ENCODE measurements at regions of chr6 and their contacts with region 1.

Region 1: GRCh38 chr6:156776840-156777576 is at the start of gene ARID1B:
- DNase-seq: peak; percentile 81 to 94 (median 83)
- ATAC-seq: peak; percentile 66
- H3K4me3 ChIP-seq: peak within 1 kb of the TSS; percentile 56 to 72
- H3K27ac ChIP-seq: peak within 1 kb of the TSS; percentile 95 to 100
- H3K4me1 ChIP-seq: peaks cover 7 to 40% of the 10 kb centered on the region in 2 donors
- H3K27me3 ChIP-seq: no peaks in the 10 kb centered on the region
- CTCF ChIP-seq: no peak
- polyA plus RNA-seq, gene ARID1B: 96.2 to 102 (median 101) TPM

Region 2: GRCh38 chr6:156686995-156687788 is 89.8 kb before region 1 on chr6:
- intact Hi-C with region 1: loop called in 1 of 2 experiments (anchors 5 kb)
- DNase-seq: peak; percentile 89 to 95 (median 90)
- ATAC-seq: peak; percentile 91
- H3K4me3 ChIP-seq: peak overlapping the region; percentile 53 to 60
- H3K27ac ChIP-seq: peak overlapping the region; percentile 96 to 99
- H3K4me1 ChIP-seq: peaks cover 0 to 9% of the 10 kb centered on the region in 2 donors
- H3K27me3 ChIP-seq: no peaks in the 10 kb centered on the region
- CTCF ChIP-seq: no peak

Region 3: GRCh38 chr6:156901309-156902019 is 124.5 kb after region 1 on chr6:
- intact Hi-C with region 1: no loop called
- DNase-seq: peak in 1 of 4 donors; percentile 62
- ATAC-seq: no peak
- H3K4me3 ChIP-seq: no peak overlapping the region
- H3K27ac ChIP-seq: no peak overlapping the region
- H3K4me1 ChIP-seq: peaks cover 0 to 5% of the 10 kb centered on the region in 2 donors
- H3K27me3 ChIP-seq: no peaks in the 10 kb centered on the region
- CTCF ChIP-seq: no peak

Region 4: DNA sequence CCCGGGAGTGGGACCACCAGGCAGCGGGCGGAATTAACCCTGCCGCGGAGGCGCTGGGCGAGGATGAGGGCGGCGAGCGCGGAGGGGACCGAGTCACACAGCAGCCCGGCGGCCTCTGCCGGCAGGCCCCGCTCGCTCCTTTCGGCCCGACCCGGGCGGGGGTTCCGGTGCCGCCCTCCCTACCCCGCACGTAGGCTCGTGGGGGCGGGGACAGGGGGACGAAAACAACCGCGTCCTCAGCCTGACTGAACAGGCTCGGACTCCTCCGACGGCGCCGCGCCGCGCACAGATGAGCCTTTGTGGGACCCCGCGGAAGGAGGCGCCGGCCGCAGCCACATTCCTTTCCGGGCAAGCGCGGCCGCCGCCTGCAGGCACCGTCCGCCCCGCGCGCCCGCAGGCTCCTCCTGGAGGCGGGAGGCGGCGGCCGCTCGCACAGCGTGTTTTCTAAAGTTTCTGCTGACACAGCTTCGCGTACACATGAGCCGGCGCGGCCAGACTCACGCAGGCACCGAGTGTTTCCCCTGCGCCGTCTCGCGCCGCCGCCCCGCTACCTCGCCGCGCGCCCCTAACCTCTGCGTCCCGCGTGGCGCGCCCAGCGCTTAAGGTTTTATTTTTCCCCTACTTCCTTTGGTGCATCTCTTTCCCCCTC is 244.5 kb after region 1 on chr6:
- intact Hi-C with region 1: loop called in 1 of 2 experiments (anchors 10 kb)
- DNase-seq: peak; percentile 91 to 97 (median 95)
- ATAC-seq: peak; percentile 94
- H3K4me3 ChIP-seq: peak overlapping the region; percentile 74 to 81
- H3K27ac ChIP-seq: peak overlapping the region; percentile 99 to 100
- H3K4me1 ChIP-seq: peaks cover 4 to 42% of the 10 kb centered on the region in 2 donors
- H3K27me3 ChIP-seq: no peaks in the 10 kb centered on the region
- CTCF ChIP-seq: peak; percentile 16 to 38

Region 5: GRCh38 chr6:157036232-157036711 is 259.3 kb after region 1 on chr6:
- intact Hi-C with region 1: no loop called
- DNase-seq: peak in 1 of 4 donors; percentile 37
- ATAC-seq: peak; percentile 86
- H3K4me3 ChIP-seq: no peak overlapping the region
- H3K27ac ChIP-seq: peak overlapping the region; percentile 57 to 66
- H3K4me1 ChIP-seq: peaks cover 0 to 47% of the 10 kb centered on the region in 2 donors
- H3K27me3 ChIP-seq: no peaks in the 10 kb centered on the region
- CTCF ChIP-seq: no peak

Region 6: DNA sequence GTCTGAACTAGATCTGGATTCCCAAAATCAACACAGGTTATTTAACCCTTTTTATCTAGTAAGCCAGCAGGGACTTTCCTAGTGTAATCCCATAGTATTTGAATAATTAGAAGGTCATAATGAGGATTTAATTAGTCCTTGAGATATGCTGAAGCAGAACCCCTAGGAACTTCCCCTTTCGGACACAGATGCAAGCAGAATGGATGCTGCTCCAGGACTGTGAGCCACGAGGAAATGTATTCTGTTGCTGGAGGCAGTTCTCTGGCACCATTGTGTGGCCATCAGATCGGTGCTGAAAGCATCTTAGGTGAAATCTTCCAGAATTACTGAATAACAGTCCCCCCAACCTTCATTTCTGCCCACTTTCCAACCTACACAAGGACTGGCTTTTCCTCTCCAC is 339.4 kb after region 1 on chr6:
- intact Hi-C with region 1: no loop called
- DNase-seq: no peak
- ATAC-seq: no peak
- H3K4me3 ChIP-seq: no peak overlapping the region
- H3K27ac ChIP-seq: no peak overlapping the region
- H3K4me1 ChIP-seq: no peaks in the 10 kb centered on the region
- H3K27me3 ChIP-seq: no peaks in the 10 kb centered on the region
- CTCF ChIP-seq: no peak

Region 7: DNA sequence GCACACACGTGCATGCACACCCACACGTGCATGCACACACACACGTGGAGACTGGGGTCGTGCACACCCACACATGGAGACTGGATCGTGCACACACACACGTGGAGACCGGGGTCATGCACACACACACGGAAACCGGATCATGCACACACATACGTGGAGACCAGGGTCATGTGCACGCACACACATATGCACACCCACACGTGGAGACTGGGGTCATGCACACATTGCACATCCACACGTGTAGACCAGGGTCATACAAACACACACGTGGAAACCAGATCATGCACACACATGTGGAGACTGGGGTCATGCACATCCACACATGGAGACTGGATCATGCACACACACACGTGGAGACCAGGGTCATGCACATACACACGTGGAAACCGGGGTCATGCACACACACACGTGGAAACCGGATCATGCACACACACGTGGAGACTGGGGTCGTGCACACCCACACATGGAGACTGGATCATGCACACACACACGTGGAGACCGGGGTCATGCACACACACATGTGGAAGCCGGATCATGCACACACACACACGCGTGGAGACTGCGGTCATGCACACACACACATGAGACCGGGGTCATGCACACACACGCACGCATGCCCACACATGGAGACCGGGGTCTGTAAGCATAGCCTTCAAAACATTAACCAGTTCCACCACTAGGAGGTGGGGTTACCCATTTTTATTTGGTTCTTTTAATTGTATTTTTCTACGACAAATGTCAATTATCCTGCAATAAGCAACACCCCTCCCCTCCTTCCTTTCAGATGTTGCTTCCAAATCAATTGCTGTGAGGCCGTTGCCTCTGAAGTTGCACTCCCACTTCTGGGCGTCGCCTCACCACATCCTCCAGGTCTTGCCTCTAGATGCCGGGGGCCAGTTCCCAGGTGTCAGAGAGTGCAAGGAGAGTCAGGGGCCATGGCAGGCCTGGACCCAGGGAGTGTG is 450.5 kb after region 1 on chr6:
- intact Hi-C with region 1: no loop called
- DNase-seq: no peak
- ATAC-seq: no peak
- H3K4me3 ChIP-seq: no peak overlapping the region
- H3K27ac ChIP-seq: no peak overlapping the region
- H3K4me1 ChIP-seq: peaks cover 0 to 5% of the 10 kb centered on the region in 2 donors
- H3K27me3 ChIP-seq: peaks cover 0 to 9% of the 10 kb centered on the region in 2 donors
- CTCF ChIP-seq: no peak

Measured in left lung (tissue), 14 donors.